ENCODE measurements at regions of chr7 and their contacts with region 1.

Region 1: GRCh38 chr7:98186452-98187137 is 24.6 kb upstream of the BHLHA15 start:
- DNase-seq: no peak
- H3K4me3 ChIP-seq: peak overlapping the region; percentile 20 to 29
- H3K27ac ChIP-seq: peak overlapping the region; percentile 85 to 92
- H3K4me1 ChIP-seq: peaks cover 0 to 11% of the 10 kb centered on the region in 2 donors
- H3K27me3 ChIP-seq: no peaks in the 10 kb centered on the region
- CTCF ChIP-seq: no peak

Region 2: DNA sequence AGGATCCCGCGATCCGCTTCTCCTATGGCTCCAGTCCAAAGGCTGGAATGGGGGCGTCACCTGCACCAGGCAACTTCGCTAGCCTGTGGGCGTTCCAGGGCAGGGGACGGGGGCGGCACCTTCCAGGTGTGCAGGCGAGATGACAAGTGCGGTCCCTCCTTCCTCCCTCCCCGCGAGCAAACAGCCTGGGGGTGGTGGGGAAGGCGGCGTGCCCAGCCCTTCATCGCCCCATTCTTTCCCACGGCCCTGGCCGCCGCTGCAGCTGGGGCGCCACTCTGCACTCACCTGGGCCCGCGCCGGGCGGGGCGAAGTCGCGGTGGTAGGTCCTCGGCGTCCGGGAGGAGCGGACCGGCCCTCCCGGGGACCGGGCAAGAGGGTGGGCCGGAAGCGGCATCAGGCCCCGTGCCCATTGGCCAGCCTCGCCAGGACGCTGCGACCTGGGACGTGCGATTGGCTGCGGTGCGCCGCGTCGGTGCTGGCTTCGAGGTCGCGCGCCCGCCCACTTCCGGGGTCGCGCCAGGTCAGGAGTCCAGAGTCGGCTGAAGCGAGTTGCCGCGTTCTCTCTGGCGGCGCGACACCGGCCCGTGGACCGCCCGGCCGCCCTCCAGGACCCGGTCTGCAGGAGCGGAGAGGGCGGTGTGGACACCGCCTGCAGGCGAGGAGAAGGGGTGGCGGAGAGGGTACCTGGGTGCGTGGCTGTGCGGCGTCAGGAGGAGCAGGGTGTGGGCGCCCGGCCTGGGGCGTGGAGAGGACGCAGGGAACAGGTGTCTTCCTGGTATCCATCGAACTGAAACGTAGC is 65.4 kb after region 1 on chr7 and contains the start of gene TECPR1:
- intact Hi-C with region 1: loop called (anchors 5 kb)
- DNase-seq: peak; percentile 77 to 96
- H3K4me3 ChIP-seq: peak within 1 kb of the TSS; percentile 80 to 90
- H3K27ac ChIP-seq: peak within 1 kb of the TSS; percentile 65 to 81
- H3K4me1 ChIP-seq: peaks cover 6 to 18% of the 10 kb centered on the region in 2 donors
- H3K27me3 ChIP-seq: no peaks in the 10 kb centered on the region
- CTCF ChIP-seq: no peak
- total RNA-seq, gene TECPR1: 28.1 TPM

Region 3: GRCh38 chr7:98372993-98373392 is 186.4 kb after region 1 on chr7:
- intact Hi-C with region 1: no loop called
- DNase-seq: no peak
- H3K4me3 ChIP-seq: no peak overlapping the region
- H3K27ac ChIP-seq: no peak overlapping the region
- H3K4me1 ChIP-seq: no peaks in the 10 kb centered on the region
- H3K27me3 ChIP-seq: no peaks in the 10 kb centered on the region
- CTCF ChIP-seq: no peak

Region 4: GRCh38 chr7:98816241-98816640 is 629.6 kb after region 1 on chr7:
- intact Hi-C with region 1: no loop called
- DNase-seq: peak; percentile 75 to 89
- H3K4me3 ChIP-seq: no peak overlapping the region
- H3K27ac ChIP-seq: peak overlapping the region; percentile 84 to 96
- H3K4me1 ChIP-seq: peaks cover 0 to 36% of the 10 kb centered on the region in 2 donors
- H3K27me3 ChIP-seq: no peaks in the 10 kb centered on the region
- CTCF ChIP-seq: no peak